Activated T-helper 1 cell treated with anti-CD3 and anti-CD28 coated beads, Interleukin-12 subunit alpha, Interleukin-12 subunit beta, Interleukin-2, Interleukin-4 antibody, amounts not matched to agents 30 ng/mL and 10 ng/mL and 1 ng/mL, durations not matched to agents 14 hours and 24 hours and 36 hours (primary cell): ENCODE measurements at regions of chr16 and their contacts with region 1.

Region 1: GRCh38 chr16:9090960-9091866 is at the start of gene HAPSTR1:
- DNase-seq: peak; percentile 98
- H3K4me3 Mint-ChIP-seq: peak within 1 kb of the TSS; percentile 97
- H3K27ac Mint-ChIP-seq: peak within 1 kb of the TSS; percentile 96
- H3K4me1 Mint-ChIP-seq: peaks cover 38% of the 10 kb centered on the region
- H3K27me3 Mint-ChIP-seq: peaks cover 1% of the 10 kb centered on the region
- total RNA-seq, gene HAPSTR1: 55.2 and 59.1 TPM in 2 replicates

Region 2: GRCh38 chr16:8621572-8622314 is 469.5 kb before region 1 on chr16 and contains the start of gene METTL22:
- intact Hi-C with region 1: loop called (anchors 5 kb)
- DNase-seq: peak; percentile 90
- H3K4me3 Mint-ChIP-seq: peak within 1 kb of the TSS; percentile 99
- H3K27ac Mint-ChIP-seq: peak within 1 kb of the TSS; percentile 87
- H3K4me1 Mint-ChIP-seq: peaks cover 12% of the 10 kb centered on the region
- H3K27me3 Mint-ChIP-seq: peaks cover 8% of the 10 kb centered on the region
- total RNA-seq, gene METTL22: 30.0 and 32.0 TPM in 2 replicates

Region 3: DNA sequence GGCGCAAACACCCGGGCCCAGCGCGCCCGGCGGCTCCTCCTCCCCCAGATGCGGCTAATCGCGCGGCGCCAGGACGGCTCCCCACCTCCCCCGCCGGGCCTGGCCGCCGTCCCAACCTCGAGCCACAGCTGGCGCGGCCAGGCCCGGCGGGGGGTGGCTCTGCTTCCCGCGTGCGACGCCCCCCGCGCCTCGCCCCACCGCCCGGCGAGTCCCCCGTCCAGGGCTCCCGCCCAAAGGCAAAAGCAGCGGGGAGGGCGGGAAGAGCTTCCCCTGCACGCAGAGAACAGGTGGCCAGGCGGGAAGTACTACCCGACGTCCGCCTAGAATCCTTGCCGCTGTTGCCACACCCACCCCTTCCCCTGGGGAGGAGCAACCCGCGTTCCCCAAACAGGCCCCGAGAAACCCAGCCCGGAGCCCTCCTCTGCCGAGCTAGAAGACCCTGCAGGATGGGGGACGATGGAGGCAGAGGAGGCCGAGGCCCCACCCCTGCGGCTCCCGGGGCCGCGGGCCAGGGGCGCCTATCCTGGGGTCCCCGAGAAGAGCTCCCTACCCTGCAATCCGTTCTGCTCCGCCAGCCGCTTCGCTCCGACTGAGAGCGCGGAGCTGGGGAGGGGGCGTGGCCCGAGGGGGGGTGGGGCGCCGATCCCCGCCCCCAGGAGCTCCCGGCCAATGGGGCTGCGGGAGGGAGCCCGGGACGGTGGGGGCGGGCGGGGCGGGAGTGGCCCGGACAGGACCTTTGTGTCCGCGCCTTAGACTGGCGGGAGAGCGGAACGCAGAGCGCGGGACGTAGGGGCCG is 222.6 kb before region 1 on chr16 and contains the start of gene CARHSP1:
- intact Hi-C with region 1: loop called (anchors 2 kb)
- DNase-seq: peak; percentile 79
- H3K4me3 Mint-ChIP-seq: peak within 1 kb of the TSS; percentile 94
- H3K27ac Mint-ChIP-seq: peak within 1 kb of the TSS; percentile 96
- H3K4me1 Mint-ChIP-seq: peaks cover 46% of the 10 kb centered on the region
- H3K27me3 Mint-ChIP-seq: no peaks in the 10 kb centered on the region
- total RNA-seq, gene CARHSP1: 79.4 and 80.5 TPM in 2 replicates

Region 4: DNA sequence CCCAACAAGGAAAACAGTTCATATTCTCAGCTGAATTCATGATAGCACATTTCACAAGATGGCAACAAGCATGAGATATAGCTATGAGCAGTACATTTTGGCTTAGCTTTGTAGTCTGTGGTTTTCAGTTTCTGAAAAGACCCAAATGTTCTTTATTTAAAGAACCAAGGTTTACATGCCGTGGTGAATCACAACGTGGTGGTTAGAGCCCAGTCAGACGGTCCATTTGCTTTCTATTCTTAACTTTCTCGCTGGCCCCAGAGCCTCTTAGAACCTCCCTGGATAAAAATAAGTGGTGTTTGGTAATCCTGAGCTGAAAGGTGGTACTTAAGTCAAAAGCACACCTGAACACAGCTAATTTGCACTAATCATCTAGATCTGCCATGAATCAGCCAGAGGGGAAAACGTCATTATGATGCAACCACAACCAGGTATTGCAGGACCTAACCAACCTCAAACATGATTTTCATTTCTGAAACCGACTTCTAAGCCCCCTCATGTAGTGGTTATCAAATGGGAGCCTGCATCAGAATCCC is 18.3 kb before region 1 on chr16:
- intact Hi-C with region 1: loop called (anchors 1 kb)
- DNase-seq: no peak
- H3K4me3 Mint-ChIP-seq: no peak overlapping the region
- H3K27ac Mint-ChIP-seq: peak overlapping the region; percentile 73
- H3K4me1 Mint-ChIP-seq: peaks cover 34% of the 10 kb centered on the region
- H3K27me3 Mint-ChIP-seq: no peaks in the 10 kb centered on the region

Region 5: DNA sequence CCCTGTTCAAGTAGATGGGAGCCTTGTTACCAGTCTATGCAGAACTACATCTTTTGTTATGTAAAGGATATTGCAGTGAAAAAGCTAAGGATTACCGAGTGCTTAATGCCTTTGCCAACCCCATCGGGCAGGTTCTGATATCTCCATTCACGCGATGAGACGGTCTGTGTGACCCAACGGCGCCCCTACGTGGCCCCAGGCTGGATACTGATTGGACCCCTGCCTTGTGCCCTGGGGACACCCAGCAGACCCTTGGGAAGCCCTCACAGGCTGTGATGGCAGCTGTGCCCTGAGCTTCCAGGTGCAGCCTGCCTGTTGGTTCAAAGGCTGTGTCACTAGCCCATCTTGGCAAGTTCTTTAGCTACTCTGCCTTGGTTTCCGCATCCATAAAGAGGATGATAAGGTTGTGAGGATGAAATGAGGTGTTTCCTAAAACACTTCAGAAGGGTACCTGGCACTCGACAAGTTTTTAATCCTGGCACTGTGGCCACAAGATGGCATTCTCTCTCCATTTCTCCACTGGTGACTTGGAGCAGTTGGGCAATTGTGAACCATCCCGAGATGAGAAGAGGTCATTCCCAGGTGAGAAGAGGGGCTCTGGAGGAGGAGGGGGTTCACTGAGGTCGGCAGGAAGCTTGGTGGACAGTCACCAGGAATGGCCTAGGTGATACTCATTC is 33.8 kb after region 1 on chr16:
- intact Hi-C with region 1: loop called (anchors 1 kb)
- DNase-seq: no peak
- H3K4me3 Mint-ChIP-seq: no peak overlapping the region
- H3K27ac Mint-ChIP-seq: peak overlapping the region; percentile 14
- H3K4me1 Mint-ChIP-seq: peaks cover 52% of the 10 kb centered on the region
- H3K27me3 Mint-ChIP-seq: no peaks in the 10 kb centered on the region

Region 6: DNA sequence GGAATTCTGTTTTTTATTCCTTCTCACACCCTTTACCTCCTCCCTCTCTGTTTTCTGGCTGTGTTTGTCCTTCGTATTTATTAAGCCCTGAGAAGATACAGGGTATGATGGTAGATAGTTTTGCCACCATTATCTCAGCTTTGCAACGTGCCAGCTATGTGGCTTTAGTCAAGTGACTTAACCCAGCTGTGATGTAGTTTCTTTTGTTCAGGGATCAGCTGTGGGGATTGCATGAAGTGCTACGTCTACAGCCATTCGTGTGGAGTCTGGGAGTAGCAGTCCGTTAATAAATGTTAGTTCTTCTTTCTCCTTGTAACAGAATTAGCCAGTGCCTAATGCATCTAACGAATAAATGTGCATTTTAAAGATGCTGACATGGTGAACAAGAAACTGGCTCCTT is 128.6 kb after region 1 on chr16:
- intact Hi-C with region 1: no loop called
- DNase-seq: no peak
- H3K4me3 Mint-ChIP-seq: no peak overlapping the region
- H3K27ac Mint-ChIP-seq: no peak overlapping the region
- H3K4me1 Mint-ChIP-seq: no peaks in the 10 kb centered on the region
- H3K27me3 Mint-ChIP-seq: peaks cover 3% of the 10 kb centered on the region

Region 7: DNA sequence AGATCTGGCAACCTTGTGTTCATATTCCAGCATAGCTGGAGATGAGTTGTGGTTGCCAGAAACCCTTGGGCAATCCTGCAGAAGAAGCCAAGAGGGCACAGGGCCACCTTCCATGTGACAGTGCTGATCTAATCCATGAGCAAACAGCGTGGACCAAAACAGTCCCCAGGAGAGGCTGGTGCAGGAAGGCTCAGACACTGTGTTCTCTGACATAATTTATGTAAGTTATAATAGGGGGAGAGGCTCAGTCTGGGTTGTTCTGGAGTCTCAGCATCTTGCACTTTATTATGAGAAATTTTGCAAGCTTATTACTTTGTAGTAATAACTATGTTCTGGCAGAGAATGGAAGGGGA is 274.1 kb after region 1 on chr16:
- intact Hi-C with region 1: no loop called
- DNase-seq: no peak
- H3K4me3 Mint-ChIP-seq: no peak overlapping the region
- H3K27ac Mint-ChIP-seq: no peak overlapping the region
- H3K4me1 Mint-ChIP-seq: no peaks in the 10 kb centered on the region
- H3K27me3 Mint-ChIP-seq: no peaks in the 10 kb centered on the region

Region 8: DNA sequence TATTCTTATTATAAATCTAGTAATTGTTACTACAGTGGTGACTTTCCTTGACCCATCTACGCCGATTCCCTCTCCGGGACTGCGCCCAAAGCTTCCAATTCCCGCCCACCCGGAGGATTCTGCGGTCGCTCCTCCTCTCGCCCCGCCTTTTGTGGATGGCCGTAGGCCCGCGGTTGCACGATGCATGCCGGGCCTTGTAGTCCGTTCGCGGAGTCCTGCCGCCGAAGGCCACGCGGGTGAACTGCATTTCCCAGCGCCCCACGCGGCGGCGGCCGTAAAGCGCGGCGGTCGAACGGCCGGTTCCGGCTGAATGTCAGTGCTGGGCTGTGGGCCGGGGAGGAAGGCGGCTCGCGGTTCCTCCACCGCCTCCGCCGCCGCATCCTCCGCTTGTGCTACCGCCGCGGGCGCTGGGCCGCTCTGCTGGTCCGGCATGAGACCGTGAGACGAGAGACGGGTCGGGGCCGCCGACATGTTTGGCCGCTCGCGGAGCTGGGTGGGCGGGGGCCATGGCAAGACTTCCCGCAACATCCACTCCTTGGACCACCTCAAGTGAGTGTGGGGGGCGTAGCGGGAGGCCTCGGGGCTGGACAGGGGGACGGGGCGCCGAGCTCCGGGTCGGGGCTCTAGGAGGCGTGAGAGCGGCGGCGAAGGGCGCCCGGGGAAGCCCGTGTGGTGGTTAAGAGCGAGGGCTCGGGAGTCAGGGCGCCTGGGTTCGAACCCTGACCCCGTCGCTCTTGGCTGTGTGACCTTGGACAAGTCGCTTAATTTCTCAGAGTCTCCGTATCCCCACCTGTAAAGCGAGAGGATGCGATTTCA is 1853.2 kb after region 1 on chr16 and contains the start of gene CLEC16A:
- intact Hi-C with region 1: loop called (anchors 5 kb)
- DNase-seq: peak; percentile 97
- H3K4me3 Mint-ChIP-seq: peak within 1 kb of the TSS; percentile 91
- H3K27ac Mint-ChIP-seq: peak within 1 kb of the TSS; percentile 80
- H3K4me1 Mint-ChIP-seq: peaks cover 56% of the 10 kb centered on the region
- H3K27me3 Mint-ChIP-seq: no peaks in the 10 kb centered on the region
- total RNA-seq, gene CLEC16A: 36.3 and 37.4 TPM in 2 replicates